GM13977 (cell line): ENCODE measurements at regions of chr1 and their contacts with region 1.

Region 1: GRCh38 chr1:65958561-65959350 is 166.1 kb downstream of the PDE4B start:
- DNase-seq: peak; percentile 9
- CTCF ChIP-seq: peak; percentile 66

Region 2: DNA sequence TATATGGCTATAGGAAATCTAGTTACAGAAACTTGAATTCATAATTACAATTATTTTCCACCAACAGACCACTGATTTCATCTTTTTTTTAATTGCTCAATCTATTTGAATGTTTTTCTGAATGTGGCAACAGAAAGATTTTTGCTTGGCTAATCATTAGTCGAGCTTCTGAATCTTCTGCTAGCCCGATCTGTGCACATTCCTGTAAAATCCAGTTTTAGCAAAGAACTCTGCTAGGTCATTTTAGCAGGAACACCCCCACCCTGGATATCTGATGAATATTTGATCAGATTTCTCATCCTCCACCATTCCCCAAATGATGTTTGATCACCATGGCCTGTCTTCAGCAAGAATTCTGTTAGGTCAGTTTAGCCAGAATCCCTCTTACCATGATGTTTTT is 362.0 kb before region 1 on chr1:
- in situ Hi-C with region 1: no loop called
- DNase-seq: no peak
- CTCF ChIP-seq: no peak

Region 3: DNA sequence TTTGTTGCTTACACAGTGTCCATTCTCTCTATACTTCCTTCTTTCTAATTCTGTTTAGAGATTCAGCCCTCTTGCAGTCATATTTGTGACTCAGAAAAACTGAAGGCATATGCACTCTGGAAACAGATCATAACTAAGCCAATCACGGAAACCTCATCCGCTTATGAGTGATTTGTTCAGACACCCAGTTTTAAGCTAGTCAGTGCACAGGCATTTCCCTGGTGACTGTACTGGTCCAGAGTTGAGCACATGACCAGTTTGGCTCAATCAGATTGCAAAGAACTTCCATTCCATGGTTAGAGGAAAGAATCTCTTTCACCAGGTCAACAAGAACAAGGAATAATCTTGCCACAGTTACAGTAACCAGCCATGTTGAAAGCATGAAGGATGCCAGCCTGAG is 506.0 kb after region 1 on chr1:
- in situ Hi-C with region 1: loop called (anchors 25 kb)
- DNase-seq: no peak
- CTCF ChIP-seq: no peak